Activated CD4-positive, alpha-beta T cell treated with anti-CD3 and anti-CD28 coated beads, Interleukin-2, amount 10 ng/mL, durations not matched to agents 24 days and 14 days (primary cell): ENCODE measurements at regions of chrX and their contacts with region 1.

Region 1: GRCh38 chrX:24054182-24055042 is at the start of gene EIF2S3:
- DNase-seq: peak; percentile 95
- H3K4me3 Mint-ChIP-seq: no peak within 1 kb of the TSS
- H3K27ac Mint-ChIP-seq: peak within 1 kb of the TSS; percentile 100
- H3K4me1 Mint-ChIP-seq: peaks cover 6% of the 10 kb centered on the region
- H3K27me3 Mint-ChIP-seq: no peaks in the 10 kb centered on the region
- total RNA-seq, gene EIF2S3: 207 and 214 TPM in 2 replicates

Region 2: GRCh38 chrX:23907498-23908218 is 146.8 kb before region 1 on chrX and contains the starts of genes APOO and CXorf58:
- intact Hi-C with region 1: loop called (anchors 1 kb)
- DNase-seq: peak; percentile 97
- H3K4me3 Mint-ChIP-seq: peak within 1 kb of the TSS; percentile 82
- H3K27ac Mint-ChIP-seq: peak within 1 kb of the TSS; percentile 88
- H3K4me1 Mint-ChIP-seq: peaks cover 17% of the 10 kb centered on the region
- H3K27me3 Mint-ChIP-seq: no peaks in the 10 kb centered on the region
- total RNA-seq, gene APOO: 27.1 and 33.7 TPM in 2 replicates
- total RNA-seq, gene CXorf58: not detected in 2 replicates

Region 3: DNA sequence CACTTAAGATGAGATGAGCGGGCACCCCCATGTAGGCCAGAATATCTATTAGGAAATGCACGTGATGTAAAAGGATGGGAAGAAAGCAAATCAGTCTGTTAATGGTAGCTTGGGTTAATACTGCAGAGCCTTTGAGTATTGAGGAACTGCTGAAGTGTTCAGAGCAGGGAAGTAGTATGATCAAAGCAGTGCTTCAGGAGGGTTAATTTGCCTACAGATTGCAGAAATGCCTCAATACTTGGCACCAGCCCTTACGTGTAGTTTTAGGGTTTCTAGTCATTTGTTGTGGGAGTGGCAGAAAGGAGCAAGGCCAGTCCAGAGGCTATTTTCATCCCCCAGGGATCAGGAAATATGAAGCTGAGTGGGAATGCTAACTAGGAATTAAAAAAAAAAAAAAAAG is 114.8 kb after region 1 on chrX:
- intact Hi-C with region 1: loop called (anchors 1 kb)
- DNase-seq: no peak
- H3K4me3 Mint-ChIP-seq: peak overlapping the region; percentile 72
- H3K27ac Mint-ChIP-seq: peak overlapping the region; percentile 92
- H3K4me1 Mint-ChIP-seq: peaks cover 37% of the 10 kb centered on the region
- H3K27me3 Mint-ChIP-seq: no peaks in the 10 kb centered on the region